ENCODE measurements at regions of chr4 and their contacts with region 1.

Region 1: GRCh38 chr4:99816545-99817308 is at the start of gene DAPP1:
- DNase-seq: peak; percentile 96
- H3K4me3 ChIP-seq: peak within 1 kb of the TSS; percentile 80
- H3K27ac ChIP-seq: peak within 1 kb of the TSS; percentile 95
- H3K4me1 ChIP-seq: peaks cover 65% of the 10 kb centered on the region
- CTCF ChIP-seq: no peak
- total RNA-seq, gene DAPP1: 55.7 and 57.3 TPM in 2 replicates

Region 2: DNA sequence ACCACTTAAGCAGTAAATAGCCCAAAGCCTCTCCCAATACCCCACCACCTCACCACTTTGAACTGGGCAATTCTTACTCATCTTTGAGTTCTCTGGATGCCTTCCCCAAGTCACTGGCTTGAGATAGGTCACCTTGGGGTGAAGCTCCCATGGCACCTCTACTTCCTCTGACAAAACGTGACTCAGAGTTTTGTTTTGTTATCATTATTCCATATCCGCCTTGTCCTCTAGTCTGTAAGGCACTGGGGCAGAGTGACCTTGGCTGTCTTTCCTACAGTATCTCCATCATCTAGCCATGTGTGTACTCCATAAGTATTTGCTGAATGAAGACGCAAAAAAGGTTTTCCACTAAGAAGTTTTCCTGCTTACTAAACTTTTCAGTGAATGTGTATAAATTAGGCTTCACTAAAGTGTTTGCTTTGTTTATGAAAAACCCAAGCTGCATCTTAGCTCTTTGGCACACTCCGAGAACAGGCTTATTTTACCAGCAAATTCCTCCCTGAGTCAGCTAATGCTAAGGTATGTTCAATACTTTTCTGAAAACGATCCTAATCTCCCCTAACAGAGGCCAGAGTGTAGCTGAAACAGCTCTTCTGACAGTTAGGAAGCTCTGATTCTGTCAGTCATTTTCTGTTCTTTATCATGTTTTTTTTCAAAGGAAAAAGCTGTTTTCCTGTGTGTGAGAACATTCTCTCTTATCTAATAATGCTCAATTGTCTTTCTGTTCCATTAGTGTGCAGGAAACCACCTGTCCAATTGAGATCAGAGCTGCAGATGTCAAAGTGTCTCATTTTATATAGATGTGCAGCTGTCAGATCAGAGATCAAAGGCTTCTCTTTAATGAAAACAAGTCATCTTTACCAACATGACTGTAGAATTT is 1128.1 kb before region 1 on chr4:
- CTCF ChIA-PET with region 1: no interaction called
- POLR2A ChIA-PET with region 1: no interaction called
- intact Hi-C with region 1: no loop called
- DNase-seq: no peak
- H3K4me3 ChIP-seq: no peak overlapping the region
- H3K27ac ChIP-seq: no peak overlapping the region
- H3K4me1 ChIP-seq: no peaks in the 10 kb centered on the region
- CTCF ChIP-seq: no peak

Region 3: GRCh38 chr4:98995183-98996055 is 821.3 kb before region 1 on chr4 and contains the start of gene METAP1:
- CTCF ChIA-PET with region 1: no interaction called
- POLR2A ChIA-PET with region 1: no interaction called
- intact Hi-C with region 1: loop called (anchors 2 kb)
- DNase-seq: peak; percentile 98
- H3K4me3 ChIP-seq: peak within 1 kb of the TSS; percentile 92
- H3K27ac ChIP-seq: peak within 1 kb of the TSS; percentile 72
- H3K4me1 ChIP-seq: peaks cover 15% of the 10 kb centered on the region
- CTCF ChIP-seq: peak; percentile 86
- total RNA-seq, gene METAP1: 42.6 and 46.8 TPM in 2 replicates

Region 4: GRCh38 chr4:99827454-99827853 is 10.7 kb after region 1 on chr4:
- CTCF ChIA-PET with region 1: interaction called, 5 read pairs
- POLR2A ChIA-PET with region 1: interaction called, 25 read pairs
- intact Hi-C with region 1: no loop called
- DNase-seq: no peak
- H3K4me3 ChIP-seq: no peak overlapping the region
- H3K27ac ChIP-seq: no peak overlapping the region
- H3K4me1 ChIP-seq: peaks cover 53% of the 10 kb centered on the region
- CTCF ChIP-seq: no peak

Region 5: GRCh38 chr4:99859618-99860017 is 42.9 kb after region 1 on chr4:
- CTCF ChIA-PET with region 1: no interaction called
- POLR2A ChIA-PET with region 1: interaction called, 9 read pairs
- intact Hi-C with region 1: loop called (anchors 2 kb)
- DNase-seq: peak; percentile 63
- H3K4me3 ChIP-seq: peak overlapping the region; percentile 3
- H3K27ac ChIP-seq: peak overlapping the region; percentile 39
- H3K4me1 ChIP-seq: peaks cover 49% of the 10 kb centered on the region
- CTCF ChIP-seq: no peak

Region 6: DNA sequence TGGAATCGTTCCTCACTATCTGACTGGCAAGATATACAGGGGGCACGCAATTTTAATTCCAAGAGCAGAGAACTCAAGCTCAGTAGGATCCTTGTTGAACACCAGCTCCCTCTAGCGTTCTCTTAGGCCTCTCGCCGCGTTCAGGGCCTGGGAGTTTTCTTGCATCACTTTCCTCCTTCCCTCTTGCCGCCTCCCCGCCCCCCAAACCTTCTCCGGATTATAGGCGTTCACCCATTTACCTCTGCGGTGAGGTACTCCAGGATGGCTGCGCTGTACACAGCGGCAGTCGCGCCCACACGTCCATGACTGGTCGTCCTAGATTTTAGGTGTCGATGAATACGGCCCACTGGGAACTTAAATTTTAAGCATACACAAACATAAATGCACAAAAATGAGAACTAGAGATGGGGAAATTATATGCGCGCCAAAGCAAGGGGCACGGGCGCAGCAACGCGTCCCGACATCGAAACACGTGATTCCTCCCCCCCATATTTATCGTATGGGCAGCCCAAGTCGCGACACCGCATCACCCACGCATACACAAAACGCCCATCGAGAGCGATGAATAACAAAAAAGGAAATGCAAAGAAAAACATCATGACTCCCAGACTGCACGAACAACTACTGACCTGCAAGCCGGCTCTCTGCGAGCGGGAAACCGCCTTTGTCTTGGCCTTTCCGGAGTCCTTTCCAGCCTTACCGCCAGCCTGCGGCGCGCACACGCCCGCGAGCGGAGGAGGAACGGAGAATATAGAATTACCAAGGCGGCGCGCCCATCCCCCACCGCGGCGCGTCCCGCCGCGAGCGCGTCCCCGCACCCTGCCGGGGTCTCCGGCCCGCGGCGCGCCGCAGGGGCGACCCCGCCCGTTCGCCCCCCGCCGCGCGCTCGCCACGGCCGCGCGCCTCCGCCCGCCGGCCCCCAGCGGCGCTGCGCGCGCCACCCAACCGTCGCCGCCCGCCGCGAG is 132.6 kb after region 1 on chr4:
- CTCF ChIA-PET with region 1: interaction called, 3 read pairs
- POLR2A ChIA-PET with region 1: interaction called, 16 read pairs
- intact Hi-C with region 1: loop called (anchors 1 kb)
- DNase-seq: peak; percentile 95
- H3K4me3 ChIP-seq: peak overlapping the region; percentile 98
- H3K27ac ChIP-seq: peak overlapping the region; percentile 95
- H3K4me1 ChIP-seq: peaks cover 26% of the 10 kb centered on the region
- CTCF ChIP-seq: peak; percentile 86

Region 7: GRCh38 chr4:100248476-100248875 is 431.7 kb after region 1 on chr4:
- CTCF ChIA-PET with region 1: no interaction called
- POLR2A ChIA-PET with region 1: no interaction called
- intact Hi-C with region 1: no loop called
- DNase-seq: no peak
- H3K4me3 ChIP-seq: no peak overlapping the region
- H3K27ac ChIP-seq: no peak overlapping the region
- H3K4me1 ChIP-seq: no peaks in the 10 kb centered on the region
- CTCF ChIP-seq: no peak

Measured in OCI-LY7 (cell line).